CD4-positive, alpha-beta T cell (primary cell): ENCODE measurements at regions of chr16 and their contacts with region 1.

Region 1: GRCh38 chr16:81357711-81358260 is 43.0 kb downstream of the GAN start:
- DNase-seq: no peak
- ATAC-seq: no peak
- H3K4me3 ChIP-seq: no peak overlapping the region
- H3K4me3 Mint-ChIP-seq: no peak overlapping the region
- H3K27ac ChIP-seq: no peak overlapping the region
- H3K27ac Mint-ChIP-seq: no peak overlapping the region
- H3K4me1 ChIP-seq: no peaks in the 10 kb centered on the region
- H3K4me1 Mint-ChIP-seq: no peaks in the 10 kb centered on the region
- H3K27me3 ChIP-seq: no peaks in the 10 kb centered on the region
- H3K27me3 Mint-ChIP-seq: no peaks in the 10 kb centered on the region
- CTCF ChIP-seq: no peak

Region 2: GRCh38 chr16:81286190-81286589 is 71.6 kb before region 1 on chr16:
- CTCF ChIA-PET with region 1: no interaction called
- POLR2A ChIA-PET with region 1: no interaction called
- intact Hi-C with region 1: loop called in 1 of 2 experiments (anchors 2 kb)
- DNase-seq: no peak
- ATAC-seq: no peak
- H3K4me3 ChIP-seq: no peak overlapping the region
- H3K4me3 Mint-ChIP-seq: no peak overlapping the region
- H3K27ac ChIP-seq: no peak overlapping the region
- H3K27ac Mint-ChIP-seq: no peak overlapping the region
- H3K4me1 ChIP-seq: no peaks in the 10 kb centered on the region
- H3K4me1 Mint-ChIP-seq: no peaks in the 10 kb centered on the region
- H3K27me3 ChIP-seq: no peaks in the 10 kb centered on the region
- H3K27me3 Mint-ChIP-seq: no peaks in the 10 kb centered on the region
- CTCF ChIP-seq: no peak

Region 3: DNA sequence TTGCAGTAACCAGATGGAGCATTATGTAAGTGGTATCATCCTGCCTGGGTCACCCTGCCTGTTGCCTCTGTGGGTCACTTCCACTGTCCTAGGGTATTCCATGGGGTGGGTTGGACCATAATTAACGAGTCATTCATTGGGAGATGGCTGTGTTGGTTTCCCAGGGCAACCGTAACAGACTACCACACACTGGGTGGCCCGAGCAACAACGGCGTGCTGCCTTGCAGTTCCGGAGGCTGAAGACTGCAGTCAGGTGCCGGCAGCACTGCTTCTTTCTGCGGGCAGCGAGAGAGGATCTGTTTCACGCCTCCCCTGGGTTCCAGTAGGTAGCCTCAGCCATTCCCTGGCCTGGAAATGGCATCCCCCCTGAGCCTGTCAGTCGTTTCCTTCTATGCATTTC is 58.0 kb after region 1 on chr16:
- CTCF ChIA-PET with region 1: no interaction called
- POLR2A ChIA-PET with region 1: no interaction called
- intact Hi-C with region 1: no loop called
- DNase-seq: no peak
- ATAC-seq: no peak
- H3K4me3 ChIP-seq: no peak overlapping the region
- H3K4me3 Mint-ChIP-seq: no peak overlapping the region
- H3K27ac ChIP-seq: no peak overlapping the region
- H3K27ac Mint-ChIP-seq: no peak overlapping the region
- H3K4me1 ChIP-seq: no peaks in the 10 kb centered on the region
- H3K4me1 Mint-ChIP-seq: peaks cover 6% of the 10 kb centered on the region
- H3K27me3 ChIP-seq: no peaks in the 10 kb centered on the region
- H3K27me3 Mint-ChIP-seq: no peaks in the 10 kb centered on the region
- CTCF ChIP-seq: no peak